Lower leg skin (tissue), 4 donors: ENCODE measurements at regions of chr10 and their contacts with region 1.

Region 1: DNA sequence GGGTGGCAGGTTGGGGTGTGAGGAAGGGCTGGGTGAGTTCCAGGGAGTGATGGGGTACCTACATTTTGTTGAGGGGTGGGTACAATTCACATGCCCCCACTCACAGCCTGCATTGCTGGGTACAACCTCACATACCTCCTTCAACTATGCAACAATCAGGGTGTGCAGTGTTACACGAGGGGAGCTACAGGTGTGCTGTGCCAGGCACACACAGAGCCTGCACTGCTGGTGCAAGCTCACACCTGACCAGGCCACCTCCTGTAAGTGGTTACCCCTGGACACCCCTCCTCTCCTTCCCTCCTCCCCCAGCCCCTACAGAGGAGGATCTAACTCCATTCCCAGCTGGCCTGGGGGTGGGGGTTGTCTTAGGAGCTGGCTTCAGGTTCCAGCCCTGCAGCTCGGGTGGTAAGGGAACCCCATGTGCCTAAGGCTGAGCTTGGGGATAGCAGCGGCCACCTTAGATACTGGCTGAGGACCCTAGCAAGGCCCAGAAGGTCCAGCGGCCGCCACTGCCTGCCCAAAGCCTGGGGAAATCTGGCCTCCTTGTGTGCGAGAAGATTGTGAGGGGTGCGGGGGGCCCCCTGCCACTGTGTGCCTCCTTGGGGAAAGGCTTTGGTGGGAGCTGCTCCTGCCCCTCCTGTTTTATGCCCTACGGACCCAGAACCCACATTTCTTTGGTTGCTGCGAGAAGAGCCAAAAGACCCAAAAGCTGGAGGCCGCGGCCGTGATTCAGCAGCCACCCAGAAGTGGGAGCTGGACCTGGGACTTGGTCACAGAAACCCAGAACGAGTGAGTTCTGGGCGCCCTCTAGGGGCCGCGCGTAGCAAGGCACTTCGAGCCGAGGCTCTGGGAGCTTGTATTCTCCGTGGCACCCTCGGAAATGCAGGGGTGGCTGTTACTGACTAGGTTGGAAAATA is 10.8 kb downstream of the TLX1 start:
- DNase-seq: peak; percentile 65 to 95
- H3K4me3 ChIP-seq: no peak overlapping the region
- CTCF ChIP-seq: peak in 1 of 3 donors; percentile 74
- POLR2A ChIP-seq: no peak

Region 2: GRCh38 chr10:100100651-100101184 is 1041.2 kb before region 1 on chr10:
- intact Hi-C with region 1: no loop called
- DNase-seq: no peak
- H3K4me3 ChIP-seq: no peak overlapping the region
- CTCF ChIP-seq: no peak
- POLR2A ChIP-seq: no peak

Region 3: DNA sequence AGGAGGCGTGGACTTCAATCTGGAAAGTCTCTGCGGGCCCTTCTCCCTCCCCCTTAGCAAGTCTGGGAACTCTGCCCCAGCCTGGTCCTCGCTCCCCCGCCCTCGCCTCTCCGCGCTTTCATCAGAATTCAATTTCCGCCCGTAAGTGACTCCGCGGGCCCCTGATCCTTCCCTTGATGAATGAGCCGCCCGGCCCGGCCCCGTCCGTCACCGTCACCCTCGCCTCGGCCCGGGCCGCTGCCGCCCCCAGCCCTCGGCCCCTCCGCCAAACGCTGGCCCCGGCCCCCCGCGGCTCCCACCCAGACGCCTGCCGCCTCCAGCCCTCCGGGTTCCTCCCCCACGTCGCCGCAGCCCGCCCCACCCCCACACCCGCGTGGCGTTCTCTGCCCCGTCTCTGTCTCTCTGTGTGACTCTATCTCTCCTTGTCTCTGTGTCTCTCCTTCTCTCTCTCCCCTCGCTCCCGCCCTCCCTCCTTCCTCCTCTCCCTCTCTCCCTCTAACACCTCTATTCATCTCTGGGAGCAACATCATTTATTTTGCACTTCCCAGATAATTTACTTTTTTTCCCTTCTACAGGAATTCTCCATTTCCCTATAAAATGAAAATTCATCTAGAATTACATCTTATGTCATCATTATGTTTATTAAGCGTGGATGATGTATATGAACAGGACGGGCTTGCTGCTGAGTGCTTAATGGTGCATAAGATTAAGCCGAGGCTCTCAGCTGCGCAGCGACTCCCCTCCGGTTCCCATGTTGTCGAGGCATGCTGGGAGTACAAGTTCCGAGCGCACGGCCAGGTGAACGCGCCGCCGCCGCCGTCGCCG is 487.7 kb before region 1 on chr10:
- intact Hi-C with region 1: no loop called
- DNase-seq: no peak
- H3K4me3 ChIP-seq: no peak overlapping the region
- CTCF ChIP-seq: no peak
- POLR2A ChIP-seq: no peak

Region 4: DNA sequence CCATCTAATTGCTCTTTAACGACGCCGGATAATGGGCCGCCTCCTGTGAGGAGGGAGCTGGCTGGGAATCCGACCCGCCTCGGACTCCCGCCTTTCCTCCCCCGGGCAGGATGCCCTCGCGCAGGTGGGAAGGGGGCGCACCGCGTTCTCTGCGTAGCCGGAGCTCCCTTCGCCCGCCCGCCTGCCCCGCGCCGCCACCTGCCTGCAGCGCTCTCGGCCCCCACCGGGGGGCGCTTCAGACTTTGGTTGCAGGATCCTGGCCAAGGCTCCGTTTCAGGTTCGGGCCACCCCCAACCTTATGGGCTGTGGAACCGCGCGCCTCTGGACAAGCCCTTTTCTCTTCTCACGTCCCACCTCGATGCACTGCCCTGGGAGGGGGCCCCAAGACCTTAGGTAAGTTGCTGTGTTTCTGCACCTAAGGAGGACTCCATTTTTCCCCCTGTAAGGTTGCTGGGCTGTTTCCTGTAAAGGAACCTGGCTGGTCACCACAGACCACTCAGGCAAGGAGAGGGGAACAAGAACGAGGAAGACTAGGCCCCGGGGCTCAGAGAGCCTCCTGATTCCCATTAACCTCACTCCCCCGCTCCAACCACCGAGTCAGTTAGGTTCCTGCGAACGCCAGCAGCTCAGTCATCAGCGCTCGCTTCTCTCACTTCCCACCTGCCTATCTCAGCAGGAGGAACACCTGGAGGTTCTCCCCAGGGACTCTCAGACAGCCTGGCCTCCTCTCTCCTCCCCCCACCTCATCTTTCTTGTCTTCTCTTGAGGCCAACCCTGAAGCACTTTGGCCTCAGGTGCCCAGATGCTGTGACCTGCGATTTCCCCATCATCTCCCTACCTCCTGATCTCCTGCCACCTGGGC is 91.4 kb before region 1 on chr10:
- intact Hi-C with region 1: loop called (anchors 10 kb)
- DNase-seq: peak in 1 of 2 donors; percentile 90
- H3K4me3 ChIP-seq: no peak overlapping the region
- CTCF ChIP-seq: peak in 1 of 3 donors; percentile 32
- POLR2A ChIP-seq: no peak

Region 5: DNA sequence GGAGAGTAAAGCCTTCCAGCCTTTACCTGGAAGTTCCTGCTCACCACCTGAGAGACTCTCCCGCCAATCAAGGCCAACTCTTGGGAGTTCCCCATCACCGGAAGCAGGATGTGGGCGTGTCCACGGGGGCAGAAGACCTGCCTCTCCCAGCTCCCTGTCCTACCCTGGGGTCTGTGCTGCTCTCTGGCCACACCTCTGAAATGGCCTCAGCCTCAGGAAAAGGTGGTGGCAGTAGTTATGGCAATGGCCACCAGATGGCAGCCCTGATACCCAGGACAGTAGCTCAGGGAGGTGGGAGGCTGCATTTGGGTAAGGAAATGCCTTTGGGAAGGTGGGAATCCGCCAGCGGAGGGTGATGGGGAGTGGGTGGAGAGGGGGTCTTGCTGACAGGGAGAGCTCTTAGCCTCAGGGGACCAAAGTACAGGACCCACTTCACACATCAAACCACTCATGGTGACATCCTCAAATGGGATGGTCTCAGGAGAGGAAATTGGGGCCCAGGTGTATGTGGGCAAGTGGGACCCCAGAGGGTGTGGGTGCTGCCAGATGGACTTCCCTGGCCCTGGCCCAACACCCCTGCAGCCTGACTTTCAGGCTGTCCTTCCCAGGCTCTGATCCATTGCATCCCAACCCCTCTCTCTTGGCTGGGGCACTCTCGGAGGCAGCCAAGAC is 46.2 kb before region 1 on chr10:
- intact Hi-C with region 1: loop called (anchors 5 kb)
- DNase-seq: peak; percentile 47 to 88
- H3K4me3 ChIP-seq: no peak overlapping the region
- CTCF ChIP-seq: peak in 1 of 3 donors; percentile 39
- POLR2A ChIP-seq: no peak